AG04450 (cell line): ENCODE measurements at regions of chr12 and their contacts with region 1.

Region 1: GRCh38 chr12:69879041-69879960 is 54.3 kb downstream of the MYRFL start:
- DNase-seq: peak; percentile 43
- H3K4me3 ChIP-seq: no peak overlapping the region
- H3K27ac ChIP-seq: no peak overlapping the region
- H3K27me3 ChIP-seq: peaks cover 7% of the 10 kb centered on the region
- CTCF ChIP-seq: peak; percentile 94

Region 2: DNA sequence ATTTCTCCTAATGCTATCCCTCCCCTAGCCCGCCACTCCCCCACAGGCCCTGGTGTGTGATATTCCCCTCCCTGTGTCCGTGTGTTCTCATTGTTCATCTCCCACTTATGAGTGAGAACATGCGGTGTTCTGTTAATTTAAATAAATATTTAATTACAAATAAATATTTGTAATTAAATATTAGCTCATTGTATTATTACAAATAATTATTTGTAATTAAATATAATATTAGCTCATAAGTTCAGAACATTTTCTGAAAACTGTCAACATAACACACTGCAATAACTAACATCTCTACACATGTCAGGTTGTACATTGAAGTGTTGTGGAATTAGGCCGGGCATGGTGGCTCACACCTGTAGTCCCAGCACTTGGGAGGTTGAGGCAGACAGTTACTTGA is 135.2 kb before region 1 on chr12:
- CTCF ChIA-PET with region 1: no interaction called
- POLR2A ChIA-PET with region 1: no interaction called
- DNase-seq: no peak
- H3K4me3 ChIP-seq: no peak overlapping the region
- H3K27ac ChIP-seq: no peak overlapping the region
- H3K27me3 ChIP-seq: peaks cover 29% of the 10 kb centered on the region
- CTCF ChIP-seq: no peak

Region 3: DNA sequence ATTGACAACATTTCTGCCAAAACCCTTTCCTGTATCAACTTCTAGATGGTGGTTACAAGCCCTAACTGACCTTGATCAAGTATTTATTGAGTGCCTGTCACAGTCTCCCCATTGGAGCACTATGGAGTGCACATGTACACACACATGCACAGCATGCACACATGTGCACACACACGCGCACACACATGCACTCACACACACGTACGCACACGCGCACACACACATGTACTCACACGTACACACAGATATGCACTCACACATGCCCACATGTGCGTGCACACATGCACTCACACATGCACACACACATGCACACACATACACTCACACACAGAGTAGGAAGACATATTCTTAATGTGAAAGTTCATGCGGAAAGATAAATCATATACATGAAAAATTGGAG is 10.6 kb before region 1 on chr12:
- CTCF ChIA-PET with region 1: interaction called, 10 read pairs
- POLR2A ChIA-PET with region 1: no interaction called
- DNase-seq: no peak
- H3K4me3 ChIP-seq: no peak overlapping the region
- H3K27ac ChIP-seq: no peak overlapping the region
- H3K27me3 ChIP-seq: no peaks in the 10 kb centered on the region
- CTCF ChIP-seq: no peak

Region 4: GRCh38 chr12:70032076-70032475 is 152.8 kb after region 1 on chr12:
- CTCF ChIA-PET with region 1: no interaction called
- POLR2A ChIA-PET with region 1: no interaction called
- DNase-seq: no peak
- H3K4me3 ChIP-seq: no peak overlapping the region
- H3K27ac ChIP-seq: no peak overlapping the region
- H3K27me3 ChIP-seq: no peaks in the 10 kb centered on the region
- CTCF ChIP-seq: no peak

Region 5: DNA sequence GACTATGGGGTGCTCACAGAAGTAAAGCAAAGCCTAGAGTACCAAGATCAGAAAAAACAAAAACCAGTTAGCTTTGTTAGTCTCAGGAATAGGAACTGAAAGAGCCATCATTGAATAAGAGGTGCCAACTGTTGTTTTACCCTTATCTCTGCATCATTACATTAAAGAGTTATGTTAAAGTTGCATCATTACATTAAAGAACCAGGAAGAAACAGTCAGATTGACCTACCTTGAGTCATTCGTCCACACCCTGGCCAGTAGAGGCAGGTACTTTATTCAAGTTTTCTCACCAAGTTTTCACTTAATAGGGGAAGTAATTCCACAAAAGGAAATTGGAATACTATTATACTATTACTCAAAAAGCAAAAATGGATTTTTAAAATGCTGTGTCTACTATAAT is 242.3 kb after region 1 on chr12:
- CTCF ChIA-PET with region 1: no interaction called
- POLR2A ChIA-PET with region 1: no interaction called
- DNase-seq: no peak
- H3K4me3 ChIP-seq: no peak overlapping the region
- H3K27ac ChIP-seq: no peak overlapping the region
- H3K27me3 ChIP-seq: no peaks in the 10 kb centered on the region
- CTCF ChIP-seq: no peak

Region 6: DNA sequence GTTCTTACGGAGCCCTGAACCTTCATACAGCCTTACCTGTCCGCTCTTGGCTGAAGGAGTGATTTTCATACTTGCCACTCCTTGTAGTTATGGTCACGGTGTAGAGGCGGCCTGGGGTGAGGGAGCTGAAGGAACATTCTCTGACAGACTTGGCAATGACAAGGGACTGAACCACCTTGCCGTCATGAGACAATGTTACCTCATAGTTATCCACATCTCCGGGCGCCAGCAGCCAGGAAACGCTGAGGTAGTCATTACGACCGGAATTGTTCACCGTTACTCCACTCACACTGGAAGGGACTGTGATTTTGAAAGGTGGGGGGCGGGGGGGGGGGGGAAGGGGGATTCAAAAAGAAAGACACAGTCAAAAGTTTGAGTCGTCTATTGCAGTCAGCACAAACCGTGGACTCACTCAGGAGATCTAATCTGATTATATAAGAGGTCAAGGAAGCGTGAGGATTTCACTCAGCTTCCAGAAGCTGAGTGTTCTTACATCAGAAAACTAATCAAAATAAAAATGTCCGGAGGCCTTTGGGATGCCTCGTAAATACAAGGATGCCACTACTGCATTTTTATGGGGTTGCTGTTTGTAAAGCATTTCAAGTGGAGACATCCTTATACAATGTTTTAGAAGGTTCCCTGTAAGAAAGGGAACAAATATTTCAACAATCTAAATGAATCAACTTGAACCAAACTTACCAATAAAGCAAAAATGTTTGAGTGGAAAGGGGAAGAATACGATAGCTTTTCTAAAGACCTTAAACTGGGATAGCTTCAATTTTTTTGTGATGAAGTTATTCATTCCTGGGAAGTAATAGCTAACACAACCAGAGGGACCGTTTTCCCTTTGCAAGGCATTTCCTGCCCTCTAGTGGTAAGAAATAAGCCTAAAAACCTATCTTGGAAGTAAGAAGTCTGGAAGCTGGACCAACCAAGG is 697.3 kb after region 1 on chr12:
- CTCF ChIA-PET with region 1: interaction called, 154 read pairs
- POLR2A ChIA-PET with region 1: no interaction called
- DNase-seq: peak; percentile 50
- H3K4me3 ChIP-seq: no peak overlapping the region
- H3K27ac ChIP-seq: no peak overlapping the region
- H3K27me3 ChIP-seq: no peaks in the 10 kb centered on the region
- CTCF ChIP-seq: peak; percentile 83

Region 7: GRCh38 chr12:70590051-70590450 is 710.8 kb after region 1 on chr12:
- CTCF ChIA-PET with region 1: interaction called, 11 read pairs
- POLR2A ChIA-PET with region 1: no interaction called
- DNase-seq: peak; percentile 41
- H3K4me3 ChIP-seq: no peak overlapping the region
- H3K27ac ChIP-seq: no peak overlapping the region
- H3K27me3 ChIP-seq: no peaks in the 10 kb centered on the region
- CTCF ChIP-seq: peak; percentile 90

Region 8: GRCh38 chr12:70719672-70720420 is 840.5 kb after region 1 on chr12:
- CTCF ChIA-PET with region 1: interaction called, 15 read pairs
- POLR2A ChIA-PET with region 1: no interaction called
- DNase-seq: no peak
- H3K4me3 ChIP-seq: peak overlapping the region; percentile 37; the same call in 1 of the 2 replicates
- H3K27ac ChIP-seq: no peak overlapping the region
- H3K27me3 ChIP-seq: no peaks in the 10 kb centered on the region
- CTCF ChIP-seq: peak; percentile 98